ENCODE measurements at regions of chr17 and their contacts with region 1.

Region 1: GRCh38 chr17:42405963-42406495 is 17.0 kb downstream of the CAVIN1 start:
- DNase-seq: peak; percentile 77 to 82 (median 82)
- H3K4me3 ChIP-seq: no peak overlapping the region
- H3K27ac ChIP-seq: no peak overlapping the region
- H3K4me1 ChIP-seq: peaks cover 0 to 47% (median 39%) of the 10 kb centered on the region in 4 experiments
- H3K27me3 ChIP-seq: no peaks in the 10 kb centered on the region

Region 2: GRCh38 chr17:42055496-42055895 is 350.5 kb before region 1 on chr17:
- CTCF ChIA-PET with region 1: no interaction called
- POLR2A ChIA-PET with region 1: no interaction called
- DNase-seq: no peak
- H3K4me3 ChIP-seq: no peak overlapping the region
- H3K27ac ChIP-seq: no peak overlapping the region
- H3K4me1 ChIP-seq: peaks cover 0 to 12% (median 9%) of the 10 kb centered on the region in 4 experiments
- H3K27me3 ChIP-seq: no peaks in the 10 kb centered on the region

Region 3: GRCh38 chr17:42312285-42313130 is 93.5 kb before region 1 on chr17:
- CTCF ChIA-PET with region 1: interaction called, 132 read pairs
- POLR2A ChIA-PET with region 1: interaction called, 12 read pairs
- DNase-seq: peak; percentile 90 to 95 (median 93)
- H3K4me3 ChIP-seq: peak overlapping the region in 3 of 7 experiments; percentile 43 to 51 (median 48)
- H3K27ac ChIP-seq: peak overlapping the region; percentile 62 to 99
- H3K4me1 ChIP-seq: peaks cover 24 to 82% (median 74%) of the 10 kb centered on the region in 4 experiments
- H3K27me3 ChIP-seq: no peaks in the 10 kb centered on the region

Region 4: DNA sequence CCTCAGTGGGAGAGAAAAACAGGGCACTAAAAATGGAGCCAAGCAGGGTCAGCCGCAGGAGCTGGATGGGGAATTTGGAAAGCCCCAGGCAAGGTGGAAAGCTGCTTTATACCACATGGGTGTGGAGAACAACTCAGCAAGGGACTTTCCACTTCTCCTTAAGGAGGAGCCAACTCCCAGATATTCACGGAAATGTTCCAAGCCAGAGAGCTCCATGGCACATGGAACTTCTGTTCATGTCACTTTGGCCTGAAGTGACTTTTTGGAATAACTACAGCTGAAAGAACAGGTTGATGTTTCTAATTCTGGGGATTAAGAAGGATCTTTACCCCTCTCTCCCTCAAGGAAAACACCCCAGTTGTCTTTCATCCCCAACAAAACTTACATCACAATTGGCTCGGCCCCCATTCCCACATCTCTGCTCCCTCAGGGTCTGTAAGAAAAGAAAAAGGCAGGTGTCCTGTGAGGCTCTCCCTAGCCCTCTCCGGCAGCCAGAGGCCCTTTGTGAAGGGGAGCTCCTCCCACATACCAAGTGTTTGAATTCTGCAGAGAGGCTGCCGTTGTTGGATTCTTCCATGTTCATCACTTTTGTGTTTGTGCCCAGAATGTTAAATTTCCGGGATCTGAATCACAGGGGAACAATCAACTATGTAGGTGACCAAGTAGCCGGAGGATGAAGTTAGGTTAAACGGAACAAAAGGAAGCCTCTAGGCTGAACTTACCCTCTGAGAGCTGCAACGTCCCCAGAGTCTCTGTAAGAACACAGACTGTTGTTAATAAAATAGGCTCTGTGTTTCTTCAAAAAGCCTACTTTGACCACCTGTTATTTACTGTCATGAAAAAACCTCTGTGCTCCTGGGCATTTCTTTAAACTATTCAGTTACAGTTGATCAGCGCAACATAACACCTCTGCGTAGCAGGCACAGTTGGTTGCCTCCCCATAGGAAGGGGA is 76.7 kb before region 1 on chr17:
- CTCF ChIA-PET with region 1: interaction called, 174 read pairs
- POLR2A ChIA-PET with region 1: interaction called, 6 read pairs
- DNase-seq: no peak
- H3K4me3 ChIP-seq: no peak overlapping the region
- H3K27ac ChIP-seq: no peak overlapping the region
- H3K4me1 ChIP-seq: no peaks in the 10 kb centered on the region
- H3K27me3 ChIP-seq: no peaks in the 10 kb centered on the region

Region 5: GRCh38 chr17:42378597-42379594 is 27.1 kb before region 1 on chr17:
- CTCF ChIA-PET with region 1: interaction called, 10 read pairs
- POLR2A ChIA-PET with region 1: no interaction called
- DNase-seq: peak in 2 of 3 donors; percentile 55 to 65
- H3K4me3 ChIP-seq: peak overlapping the region in 6 of 7 experiments; percentile 55 to 80 (median 72)
- H3K27ac ChIP-seq: peak overlapping the region; percentile 69 to 78
- H3K4me1 ChIP-seq: peaks cover 12 to 42% (median 24%) of the 10 kb centered on the region in 4 experiments
- H3K27me3 ChIP-seq: no peaks in the 10 kb centered on the region

Region 6: DNA sequence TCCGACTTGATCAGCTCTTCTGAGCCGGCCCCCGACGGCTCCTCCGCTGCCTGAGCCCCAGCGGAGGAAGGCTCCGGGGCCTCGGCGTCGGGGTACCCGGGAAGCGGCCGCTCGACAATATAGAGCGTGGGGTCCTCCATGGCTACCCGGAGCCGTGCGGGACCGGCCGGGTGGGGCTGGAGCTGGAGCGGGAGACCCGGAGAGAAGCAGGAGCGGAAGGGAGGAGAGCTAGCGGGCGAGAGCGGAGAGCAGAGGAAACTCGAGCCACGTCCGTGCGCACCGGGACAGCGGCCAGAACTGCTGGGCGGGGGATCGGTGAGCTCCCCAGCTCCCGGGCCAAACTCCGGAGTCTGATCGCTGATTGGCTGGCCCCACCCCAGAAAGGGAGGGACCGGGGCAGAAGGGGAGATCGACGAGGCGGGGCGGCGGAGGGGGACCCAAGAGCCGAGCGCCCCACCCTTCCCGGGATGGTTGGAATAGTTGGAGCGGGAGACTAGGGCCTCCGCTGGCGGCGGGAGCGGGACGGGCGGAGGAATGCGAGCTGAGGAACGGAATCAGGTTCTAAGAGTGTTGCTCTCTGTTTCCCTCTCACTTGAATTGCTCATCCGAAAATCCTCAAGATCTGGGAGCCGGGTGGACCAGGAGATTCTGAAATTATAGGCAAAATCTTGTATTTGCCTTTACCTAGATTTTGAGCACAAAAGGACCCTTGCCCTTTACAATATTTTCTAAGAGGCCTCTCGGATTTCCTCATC is 17.1 kb after region 1 on chr17 and contains the start of gene CAVIN1:
- CTCF ChIA-PET with region 1: interaction called, 27 read pairs
- POLR2A ChIA-PET with region 1: no interaction called
- DNase-seq: peak; percentile 68 to 71 (median 71)
- H3K4me3 ChIP-seq: peak within 1 kb of the TSS; percentile 66 to 93 (median 83)
- H3K27ac ChIP-seq: peak within 1 kb of the TSS in 1 of 2 experiments; percentile 66
- H3K4me1 ChIP-seq: peaks cover 0 to 45% (median 41%) of the 10 kb centered on the region in 4 experiments
- H3K27me3 ChIP-seq: peaks cover 0 to 3% (median 0%) of the 10 kb centered on the region in 5 experiments

Region 7: GRCh38 chr17:42463976-42464400 is 58.0 kb after region 1 on chr17:
- CTCF ChIA-PET with region 1: no interaction called
- POLR2A ChIA-PET with region 1: no interaction called
- DNase-seq: no peak
- H3K4me3 ChIP-seq: no peak overlapping the region
- H3K27ac ChIP-seq: no peak overlapping the region
- H3K4me1 ChIP-seq: peaks cover 19 to 22% (median 21%) of the 10 kb centered on the region in 4 experiments
- H3K27me3 ChIP-seq: no peaks in the 10 kb centered on the region